Head of caudate nucleus (tissue), 42 donors: ENCODE measurements at regions of chr2 and their contacts with region 1.

Region 1: GRCh38 chr2:26970244-26970920 is at the start of gene MAPRE3:
- DNase-seq: peak; percentile 79 to 98 (median 93)

Region 2: DNA sequence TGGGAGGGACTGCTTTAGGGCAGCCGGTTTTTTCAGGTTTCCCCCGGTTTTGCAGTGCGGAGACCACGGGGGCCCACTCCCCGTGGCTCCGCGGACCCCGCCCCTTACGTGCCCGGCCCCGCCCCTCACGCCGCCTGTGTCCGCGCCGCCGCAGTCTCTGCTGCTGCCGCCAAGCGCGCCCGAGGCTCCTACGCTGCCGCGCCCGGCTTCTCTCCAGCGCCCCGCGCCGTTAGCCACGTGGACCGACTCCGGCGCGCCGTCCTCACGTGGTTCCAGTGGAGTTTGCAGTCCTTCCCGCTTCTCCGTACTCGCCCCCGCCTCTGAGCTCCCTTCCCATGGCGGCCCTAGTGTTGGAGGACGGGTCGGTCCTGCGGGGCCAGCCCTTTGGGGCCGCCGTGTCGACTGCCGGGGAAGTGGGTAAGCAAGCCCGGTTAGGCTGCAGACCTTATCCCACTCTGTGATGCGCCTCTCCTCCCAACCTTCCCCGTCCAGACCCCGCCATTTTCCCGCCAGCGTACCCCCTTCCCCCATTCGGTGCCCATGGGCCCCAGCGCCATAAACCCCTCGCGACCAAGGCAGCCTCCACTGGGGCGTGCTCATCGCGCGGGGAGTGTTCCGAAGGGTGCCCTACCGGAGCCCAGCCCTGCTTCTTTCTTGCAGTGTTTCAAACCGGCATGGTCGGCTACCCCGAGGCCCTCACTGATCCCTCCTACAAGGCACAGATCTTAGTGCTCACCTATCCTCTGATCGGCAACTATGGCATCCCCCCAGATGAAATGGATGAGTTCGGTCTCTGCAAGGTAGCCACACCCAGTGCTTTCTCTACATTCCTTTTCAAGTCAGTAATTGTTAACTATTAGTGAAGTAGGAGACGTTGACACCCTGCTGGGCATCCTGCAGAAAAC is 247.1 kb after region 1 on chr2 and contains the start of gene CAD:
- intact Hi-C with region 1: loop called (anchors 10 kb)
- DNase-seq: peak; percentile 76 to 96 (median 90)